ENCODE measurements at regions of chr1 and their contacts with region 1.

Region 1: DNA sequence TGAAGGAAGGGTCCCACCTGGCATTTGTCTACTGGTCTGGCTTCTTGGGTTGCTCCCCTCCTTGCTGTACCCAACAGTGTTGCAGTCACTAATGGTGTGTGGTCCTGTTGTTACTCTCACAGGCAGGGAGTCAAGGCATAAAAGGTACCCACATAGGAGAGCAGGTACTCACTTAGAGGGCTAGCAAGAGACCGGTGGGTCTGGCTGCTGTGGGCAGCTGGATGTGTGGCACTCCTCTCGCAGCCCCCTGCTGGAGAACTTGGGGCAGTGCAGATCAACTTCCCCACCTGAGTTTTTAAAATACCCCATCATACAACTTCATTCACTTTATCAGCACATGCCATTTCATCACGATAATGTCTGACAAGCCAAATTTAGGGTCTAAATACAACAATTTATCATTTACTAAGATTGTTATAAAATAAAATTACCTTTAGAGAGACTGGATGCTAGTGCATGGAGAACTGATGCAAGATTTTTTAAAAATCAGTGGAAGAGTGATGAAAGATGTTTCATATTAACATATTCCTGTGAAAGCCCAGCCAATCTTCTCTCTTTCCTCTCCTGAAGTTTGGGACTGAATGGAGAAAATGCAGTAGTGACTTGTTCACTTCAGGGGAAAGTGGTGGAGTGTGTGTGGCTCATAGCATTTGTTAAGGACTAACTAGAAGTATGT is 42.8 kb downstream of the ACP6 start:
- DNase-seq: peak in 1 of 2 experiments; percentile 25
- H3K4me3 ChIP-seq: no peak overlapping the region
- H3K27ac ChIP-seq: 0 out of 2 replicates have a peak overlapping the region, but pooled peaks have one; percentile 9
- H3K4me1 ChIP-seq: no peaks in the 10 kb centered on the region
- H3K27me3 ChIP-seq: no peaks in the 10 kb centered on the region
- CTCF ChIP-seq: peak; percentile 94

Region 2: GRCh38 chr1:147515046-147515869 is 112.3 kb before region 1 on chr1:
- CTCF ChIA-PET with region 1: no interaction called
- POLR2A ChIA-PET with region 1: interaction called, 4 read pairs
- intact Hi-C with region 1: loop called (anchors 1 kb)
- DNase-seq: peak; percentile 48 to 99
- H3K4me3 ChIP-seq: peak overlapping the region; percentile 39
- H3K27ac ChIP-seq: peak overlapping the region; percentile 73
- H3K4me1 ChIP-seq: peaks cover 39% of the 10 kb centered on the region
- H3K27me3 ChIP-seq: no peaks in the 10 kb centered on the region
- CTCF ChIP-seq: peak; percentile 64

Region 3: DNA sequence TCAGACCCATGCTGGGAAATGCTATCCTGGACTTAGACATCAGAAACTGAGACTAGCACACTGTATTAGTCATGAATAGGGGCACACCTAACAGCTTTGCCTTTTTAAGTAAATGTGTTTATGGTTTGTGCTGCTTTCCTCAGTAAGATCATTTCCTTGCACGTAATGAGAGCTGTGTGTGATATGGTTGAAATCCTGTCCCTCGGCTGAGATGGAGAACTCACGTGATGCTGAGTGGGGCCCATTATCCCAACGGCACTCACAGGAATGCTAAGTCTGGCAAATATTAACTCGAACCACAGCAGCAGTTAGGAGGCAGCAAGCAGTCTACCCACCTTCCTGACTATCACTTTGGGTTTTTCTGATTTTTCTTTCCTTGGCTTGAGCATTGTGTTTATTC is 48.0 kb before region 1 on chr1:
- CTCF ChIA-PET with region 1: no interaction called
- POLR2A ChIA-PET with region 1: no interaction called
- intact Hi-C with region 1: no loop called
- DNase-seq: no peak
- H3K4me3 ChIP-seq: no peak overlapping the region
- H3K27ac ChIP-seq: no peak overlapping the region
- H3K4me1 ChIP-seq: no peaks in the 10 kb centered on the region
- H3K27me3 ChIP-seq: no peaks in the 10 kb centered on the region
- CTCF ChIP-seq: no peak

Region 4: DNA sequence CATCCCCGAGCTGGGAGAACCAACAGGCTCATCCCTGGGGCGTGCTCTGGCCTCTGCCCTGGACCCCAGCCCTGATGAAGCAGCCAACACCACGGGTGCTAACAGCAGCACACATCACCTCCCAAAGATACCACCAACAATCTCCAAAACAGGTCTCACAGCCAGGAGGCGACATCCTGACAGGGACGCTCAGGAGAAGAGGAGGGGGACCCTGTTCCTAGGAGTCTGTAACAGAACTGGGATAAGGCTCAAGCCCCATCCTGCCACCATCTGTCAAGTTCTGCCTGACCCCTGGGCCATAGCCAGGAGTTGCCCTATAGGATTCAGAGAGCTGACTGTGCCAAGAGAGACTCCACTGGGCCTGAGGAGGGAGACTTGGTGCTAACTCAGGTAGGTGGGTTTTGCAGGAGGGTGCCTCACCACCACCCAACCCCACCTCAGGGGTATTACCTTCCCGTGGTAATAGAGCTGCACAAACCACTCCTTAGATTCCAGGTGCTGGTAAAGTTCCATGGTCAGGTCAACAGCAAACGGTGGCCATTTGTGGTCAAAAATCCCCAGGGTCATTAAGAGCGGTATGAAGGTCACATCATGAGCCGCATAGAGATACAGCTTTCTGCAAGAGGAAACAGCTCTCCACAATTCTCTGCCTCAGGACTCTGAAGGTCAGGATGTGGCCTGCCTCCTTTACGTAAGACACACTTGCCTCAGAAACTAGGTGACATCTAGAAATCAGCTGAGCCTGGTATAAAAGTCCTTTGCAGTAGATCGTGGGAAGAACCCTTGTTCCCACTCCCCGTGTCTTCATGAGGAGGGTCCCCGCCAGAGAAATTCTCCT is 20.4 kb after region 1 on chr1:
- CTCF ChIA-PET with region 1: no interaction called
- POLR2A ChIA-PET with region 1: interaction called, 16 read pairs
- intact Hi-C with region 1: no loop called
- DNase-seq: no peak
- H3K4me3 ChIP-seq: no peak overlapping the region
- H3K27ac ChIP-seq: no peak overlapping the region
- H3K4me1 ChIP-seq: peaks cover 13% of the 10 kb centered on the region
- H3K27me3 ChIP-seq: no peaks in the 10 kb centered on the region
- CTCF ChIP-seq: no peak

Measured in PC-9 (cell line).